ENCODE measurements at regions of chr2 and their contacts with region 1.

Region 1: GRCh38 chr2:176454893-176455811 is 185.9 kb downstream of the MTX2 start:
- DNase-seq: peak; percentile 57 to 88 (median 75)
- ATAC-seq: peak; percentile 76
- H3K4me3 ChIP-seq: no peak overlapping the region
- H3K4me3 Mint-ChIP-seq: no peak overlapping the region
- H3K27ac ChIP-seq: no peak overlapping the region
- H3K27ac Mint-ChIP-seq: no peak overlapping the region
- H3K4me1 ChIP-seq: no peaks in the 10 kb centered on the region
- H3K4me1 Mint-ChIP-seq: peaks cover 2% of the 10 kb centered on the region
- H3K27me3 ChIP-seq: peaks cover 0 to 3% of the 10 kb centered on the region in 2 experiments
- H3K27me3 Mint-ChIP-seq: peaks cover 42% of the 10 kb centered on the region
- CTCF ChIP-seq: peak; percentile 97

Region 2: GRCh38 chr2:176291809-176292283 is 163.3 kb before region 1 on chr2:
- CTCF ChIA-PET with region 1: no interaction called
- POLR2A ChIA-PET with region 1: no interaction called
- intact Hi-C with region 1: loop called in 1 of 2 experiments (anchors 10 kb)
- DNase-seq: no peak
- ATAC-seq: no peak
- H3K4me3 ChIP-seq: no peak overlapping the region
- H3K4me3 Mint-ChIP-seq: no peak overlapping the region
- H3K27ac ChIP-seq: no peak overlapping the region
- H3K27ac Mint-ChIP-seq: no peak overlapping the region
- H3K4me1 ChIP-seq: peaks cover 10% of the 10 kb centered on the region
- H3K4me1 Mint-ChIP-seq: peaks cover 41% of the 10 kb centered on the region
- H3K27me3 ChIP-seq: no peaks in the 10 kb centered on the region
- H3K27me3 Mint-ChIP-seq: no peaks in the 10 kb centered on the region
- CTCF ChIP-seq: no peak

Region 3: GRCh38 chr2:176479961-176480360 is 24.8 kb after region 1 on chr2:
- CTCF ChIA-PET with region 1: interaction called, 12 read pairs
- POLR2A ChIA-PET with region 1: no interaction called
- intact Hi-C with region 1: no loop called
- DNase-seq: no peak
- ATAC-seq: no peak
- H3K4me3 ChIP-seq: no peak overlapping the region
- H3K4me3 Mint-ChIP-seq: no peak overlapping the region
- H3K27ac ChIP-seq: no peak overlapping the region
- H3K27ac Mint-ChIP-seq: no peak overlapping the region
- H3K4me1 ChIP-seq: no peaks in the 10 kb centered on the region
- H3K4me1 Mint-ChIP-seq: no peaks in the 10 kb centered on the region
- H3K27me3 ChIP-seq: no peaks in the 10 kb centered on the region
- H3K27me3 Mint-ChIP-seq: peaks cover 17% of the 10 kb centered on the region
- CTCF ChIP-seq: no peak

Region 4: DNA sequence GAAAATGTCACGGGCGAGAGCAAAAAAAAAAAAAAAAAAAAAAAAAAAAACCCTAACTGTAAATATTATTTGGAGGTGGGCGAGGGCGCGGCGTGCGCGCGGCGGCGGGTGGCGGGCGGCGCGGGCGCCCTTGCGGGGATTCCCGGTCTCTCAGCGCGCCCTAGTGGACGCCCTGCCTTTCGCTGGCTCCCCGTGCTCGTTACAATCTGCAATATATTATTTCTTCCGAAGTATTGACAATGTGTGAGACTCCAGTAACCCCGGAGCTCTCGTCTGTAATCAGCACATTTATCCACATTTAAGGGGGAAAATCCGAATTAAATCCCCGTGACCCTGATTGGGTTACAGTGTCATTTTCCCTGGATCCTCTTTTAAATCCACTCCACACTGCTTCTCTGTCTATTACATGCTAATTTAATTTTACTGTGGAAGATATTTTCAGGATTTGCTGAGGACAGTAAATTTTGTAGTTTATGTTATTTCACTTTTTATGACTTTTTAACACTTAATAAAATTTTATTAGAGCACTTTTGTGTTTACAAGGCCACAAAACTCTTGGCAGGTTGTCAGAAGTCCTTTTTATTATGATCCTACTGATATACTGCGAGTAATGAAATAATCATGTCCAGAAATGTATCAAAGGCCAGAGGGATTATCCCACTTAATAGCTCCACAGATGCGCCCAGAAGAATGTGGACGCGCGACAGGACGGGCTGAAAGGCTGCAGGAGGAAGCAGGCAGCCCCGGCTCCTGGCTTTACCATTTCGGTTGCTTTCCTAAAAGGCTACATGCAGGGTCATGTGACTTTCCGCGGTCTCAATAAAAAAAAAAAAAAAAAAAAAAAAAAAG is 183.2 kb after region 1 on chr2:
- CTCF ChIA-PET with region 1: interaction called, 3 read pairs
- POLR2A ChIA-PET with region 1: no interaction called
- intact Hi-C with region 1: loop called in 1 of 2 experiments (anchors 5 kb)
- DNase-seq: peak; percentile 19 to 74 (median 59)
- ATAC-seq: peak; percentile 87
- H3K4me3 ChIP-seq: peak overlapping the region; percentile 48 to 55
- H3K4me3 Mint-ChIP-seq: peak overlapping the region; percentile 71
- H3K27ac ChIP-seq: no peak overlapping the region
- H3K27ac Mint-ChIP-seq: no peak overlapping the region
- H3K4me1 ChIP-seq: no peaks in the 10 kb centered on the region
- H3K4me1 Mint-ChIP-seq: peaks cover 8% of the 10 kb centered on the region
- H3K27me3 ChIP-seq: peaks cover 9 to 23% of the 10 kb centered on the region in 2 experiments
- H3K27me3 Mint-ChIP-seq: peaks cover 66% of the 10 kb centered on the region
- CTCF ChIP-seq: peak; percentile 76

Region 5: GRCh38 chr2:176804392-176804791 is 349.2 kb after region 1 on chr2:
- CTCF ChIA-PET with region 1: no interaction called
- POLR2A ChIA-PET with region 1: no interaction called
- intact Hi-C with region 1: no loop called
- DNase-seq: no peak
- ATAC-seq: no peak
- H3K4me3 ChIP-seq: no peak overlapping the region
- H3K4me3 Mint-ChIP-seq: no peak overlapping the region
- H3K27ac ChIP-seq: no peak overlapping the region
- H3K27ac Mint-ChIP-seq: no peak overlapping the region
- H3K4me1 ChIP-seq: no peaks in the 10 kb centered on the region
- H3K4me1 Mint-ChIP-seq: no peaks in the 10 kb centered on the region
- H3K27me3 ChIP-seq: no peaks in the 10 kb centered on the region
- H3K27me3 Mint-ChIP-seq: no peaks in the 10 kb centered on the region
- CTCF ChIP-seq: no peak

Region 6: GRCh38 chr2:176814306-176815052 is 359.3 kb after region 1 on chr2:
- CTCF ChIA-PET with region 1: interaction called, 3 read pairs
- POLR2A ChIA-PET with region 1: no interaction called
- intact Hi-C with region 1: loop called in 1 of 2 experiments (anchors 5 kb)
- DNase-seq: peak in 2 of 9 experiments; percentile 51 to 65
- ATAC-seq: peak; percentile 79
- H3K4me3 ChIP-seq: no peak overlapping the region
- H3K4me3 Mint-ChIP-seq: peak overlapping the region; percentile 19
- H3K27ac ChIP-seq: no peak overlapping the region
- H3K27ac Mint-ChIP-seq: no peak overlapping the region
- H3K4me1 ChIP-seq: peaks cover 45% of the 10 kb centered on the region
- H3K4me1 Mint-ChIP-seq: peaks cover 42% of the 10 kb centered on the region
- H3K27me3 ChIP-seq: no peaks in the 10 kb centered on the region
- H3K27me3 Mint-ChIP-seq: no peaks in the 10 kb centered on the region
- CTCF ChIP-seq: peak; percentile 95

Measured in CD8-positive, alpha-beta T cell (primary cell).